Colonic mucosa (tissue), 4 donors: ENCODE measurements at regions of chr4 and their contacts with region 1.

Region 1: DNA sequence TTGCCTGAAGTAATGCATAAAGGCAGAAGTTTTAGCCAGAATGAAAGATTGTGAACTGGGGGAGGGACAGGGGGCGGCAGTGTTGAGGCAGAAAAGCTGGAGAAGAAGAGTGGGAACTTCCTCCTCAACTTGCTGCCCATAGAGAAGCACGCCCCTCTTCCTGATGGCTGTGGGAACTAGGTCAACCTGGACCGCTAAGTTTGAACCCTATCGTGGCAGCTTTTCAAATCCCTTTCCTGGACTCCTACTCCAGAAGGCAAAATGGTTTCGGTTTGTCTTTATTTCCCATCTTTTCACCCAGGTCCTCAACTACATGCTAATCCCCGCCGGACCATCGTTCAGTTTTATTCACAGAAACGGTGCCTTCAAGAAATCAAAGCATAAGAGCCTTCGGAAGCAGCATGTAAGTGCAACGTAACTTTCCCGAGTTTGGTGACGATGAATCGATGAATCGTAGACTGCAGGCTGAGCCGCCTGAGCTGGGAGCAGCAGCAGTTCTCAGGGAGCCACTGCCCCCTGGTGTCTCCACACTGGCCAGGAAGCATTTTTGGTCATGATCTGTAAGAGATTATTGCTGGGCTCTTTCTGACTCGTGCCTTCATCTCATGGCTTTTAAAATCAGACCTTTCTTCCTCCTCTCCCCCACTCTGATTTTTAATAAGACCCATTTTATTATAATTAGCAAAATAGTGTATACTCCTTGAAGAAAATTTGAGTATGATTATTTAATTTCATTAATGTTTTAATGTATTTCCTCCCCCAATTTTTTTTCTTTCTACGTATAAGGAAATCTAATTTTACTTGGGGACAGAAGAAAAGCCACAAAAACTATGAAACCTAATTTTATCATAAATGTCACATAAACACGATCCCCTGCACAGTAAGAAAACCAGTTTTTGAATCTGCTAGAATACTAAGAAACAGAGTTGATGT is 21.4 kb downstream of the SPINK2 start:
- DNase-seq: peak; percentile 87
- H3K4me3 ChIP-seq: peak overlapping the region; percentile 47
- H3K27ac ChIP-seq: peak overlapping the region; percentile 15
- H3K4me1 ChIP-seq: no peaks in the 10 kb centered on the region
- H3K27me3 ChIP-seq: no peaks in the 10 kb centered on the region
- CTCF ChIP-seq: peak; percentile 75

Region 2: GRCh38 chr4:56575820-56576429 is 224.2 kb before region 1 on chr4:
- intact Hi-C with region 1: loop called (anchors 5 kb)
- DNase-seq: no peak
- H3K4me3 ChIP-seq: no peak overlapping the region
- H3K27ac ChIP-seq: no peak overlapping the region
- H3K4me1 ChIP-seq: no peaks in the 10 kb centered on the region
- H3K27me3 ChIP-seq: no peaks in the 10 kb centered on the region
- CTCF ChIP-seq: peak; percentile 36

Region 3: GRCh38 chr4:56668298-56668697 is 131.8 kb before region 1 on chr4:
- intact Hi-C with region 1: loop called (anchors 5 kb)
- DNase-seq: no peak
- H3K4me3 ChIP-seq: no peak overlapping the region
- H3K27ac ChIP-seq: no peak overlapping the region
- H3K4me1 ChIP-seq: no peaks in the 10 kb centered on the region
- H3K27me3 ChIP-seq: no peaks in the 10 kb centered on the region
- CTCF ChIP-seq: peak; percentile 47